Breast epithelium (tissue), 4 donors: ENCODE measurements at regions of chr4 and their contacts with region 1.

Region 1: GRCh38 chr4:55635741-55636655 is at the start of gene NMU:
- DNase-seq: no peak
- H3K4me3 ChIP-seq: peak within 1 kb of the TSS; percentile 27 to 59 (median 49)
- H3K27ac ChIP-seq: no peak within 1 kb of the TSS
- H3K4me1 ChIP-seq: peaks cover 0 to 8% of the 10 kb centered on the region in 2 donors
- H3K27me3 ChIP-seq: peaks cover 0 to 36% of the 10 kb centered on the region in 2 donors
- CTCF ChIP-seq: no peak
- POLR2A ChIP-seq: no peak
- total RNA-seq, gene NMU: not detected

Region 2: DNA sequence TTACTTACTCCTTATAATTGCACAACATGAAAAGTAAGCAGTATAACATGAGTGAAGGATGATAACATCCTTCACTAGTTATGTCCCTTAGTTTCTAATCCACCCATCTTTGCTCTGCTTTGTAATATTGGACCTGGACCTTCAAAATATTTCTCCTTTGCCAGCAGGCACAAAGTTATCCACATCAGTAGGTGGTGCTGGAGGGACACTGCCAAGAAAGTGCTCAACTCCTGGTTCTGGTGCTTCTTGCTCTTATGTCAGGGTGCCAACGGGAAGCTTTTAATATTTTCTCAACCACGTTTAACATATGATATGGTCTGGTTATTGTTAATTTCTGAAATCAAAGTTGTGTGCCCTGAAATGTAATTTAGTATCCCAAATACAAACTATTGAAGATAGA is 191.2 kb before region 1 on chr4:
- intact Hi-C with region 1: loop called (anchors 5 kb)
- DNase-seq: no peak
- H3K4me3 ChIP-seq: no peak overlapping the region
- H3K27ac ChIP-seq: no peak overlapping the region
- H3K4me1 ChIP-seq: no peaks in the 10 kb centered on the region
- H3K27me3 ChIP-seq: no peaks in the 10 kb centered on the region
- CTCF ChIP-seq: no peak
- POLR2A ChIP-seq: no peak

Region 3: DNA sequence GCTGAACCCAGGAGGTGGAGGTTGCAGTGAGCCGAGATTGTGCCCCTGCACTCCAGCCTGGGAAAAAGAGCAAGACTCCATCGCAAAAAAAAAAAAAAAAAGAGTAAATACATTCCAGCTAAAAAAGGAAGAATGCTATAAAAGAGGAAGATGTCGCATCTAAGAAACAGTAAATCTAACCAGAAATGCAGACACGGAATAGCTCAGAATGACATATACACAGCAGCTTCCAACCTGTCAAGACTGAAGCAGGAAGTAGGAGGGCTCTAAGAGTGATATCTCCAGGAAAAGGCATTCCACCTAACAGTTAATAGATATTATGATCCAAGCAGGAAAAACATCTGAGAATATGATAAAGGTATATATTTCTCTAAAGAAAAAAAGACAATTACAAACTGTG is 105.3 kb before region 1 on chr4:
- intact Hi-C with region 1: no loop called
- DNase-seq: no peak
- H3K4me3 ChIP-seq: no peak overlapping the region
- H3K27ac ChIP-seq: no peak overlapping the region
- H3K4me1 ChIP-seq: no peaks in the 10 kb centered on the region
- H3K27me3 ChIP-seq: no peaks in the 10 kb centered on the region
- CTCF ChIP-seq: no peak
- POLR2A ChIP-seq: no peak

Region 4: DNA sequence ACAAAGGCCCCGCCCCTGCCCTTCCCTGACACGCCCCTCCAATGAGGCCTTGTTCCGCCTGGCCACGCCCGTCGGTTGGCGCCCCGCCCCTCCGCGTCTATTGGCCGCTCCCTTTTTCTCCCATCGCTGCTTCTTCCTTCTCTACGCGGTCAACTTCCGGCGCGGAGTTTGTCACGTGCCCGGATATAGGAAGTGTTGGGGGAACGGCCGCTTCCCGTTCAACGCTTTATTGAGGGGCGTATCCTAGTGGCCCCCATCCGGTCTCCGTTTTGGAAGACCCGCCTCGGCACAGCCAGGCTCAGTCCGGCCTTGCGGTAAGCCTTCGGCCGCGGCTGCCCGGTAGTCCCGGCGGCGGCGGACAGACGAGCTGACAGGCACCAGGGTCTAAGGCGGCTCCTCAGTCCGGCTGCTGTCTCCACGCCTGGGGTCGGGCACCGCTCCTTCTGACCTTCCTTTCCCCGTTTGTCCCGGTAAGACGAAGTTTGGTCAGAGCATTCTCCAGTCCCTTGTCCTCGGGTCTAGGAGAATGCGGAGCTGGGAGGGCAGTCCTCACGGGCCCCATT is 217.6 kb after region 1 on chr4 and contains the start of gene EXOC1:
- intact Hi-C with region 1: no loop called
- DNase-seq: peak; percentile 96 to 97
- H3K4me3 ChIP-seq: peak within 1 kb of the TSS; percentile 84 to 98 (median 91)
- H3K27ac ChIP-seq: peak within 1 kb of the TSS; percentile 88 to 94
- H3K4me1 ChIP-seq: peaks cover 0 to 9% of the 10 kb centered on the region in 2 donors
- H3K27me3 ChIP-seq: no peaks in the 10 kb centered on the region
- CTCF ChIP-seq: no peak
- POLR2A ChIP-seq: peak; percentile 51
- total RNA-seq, gene EXOC1: 37.4 to 54.4 (median 45.6) TPM